ENCODE measurements at regions of chr17 and their contacts with region 1.

Region 1: DNA sequence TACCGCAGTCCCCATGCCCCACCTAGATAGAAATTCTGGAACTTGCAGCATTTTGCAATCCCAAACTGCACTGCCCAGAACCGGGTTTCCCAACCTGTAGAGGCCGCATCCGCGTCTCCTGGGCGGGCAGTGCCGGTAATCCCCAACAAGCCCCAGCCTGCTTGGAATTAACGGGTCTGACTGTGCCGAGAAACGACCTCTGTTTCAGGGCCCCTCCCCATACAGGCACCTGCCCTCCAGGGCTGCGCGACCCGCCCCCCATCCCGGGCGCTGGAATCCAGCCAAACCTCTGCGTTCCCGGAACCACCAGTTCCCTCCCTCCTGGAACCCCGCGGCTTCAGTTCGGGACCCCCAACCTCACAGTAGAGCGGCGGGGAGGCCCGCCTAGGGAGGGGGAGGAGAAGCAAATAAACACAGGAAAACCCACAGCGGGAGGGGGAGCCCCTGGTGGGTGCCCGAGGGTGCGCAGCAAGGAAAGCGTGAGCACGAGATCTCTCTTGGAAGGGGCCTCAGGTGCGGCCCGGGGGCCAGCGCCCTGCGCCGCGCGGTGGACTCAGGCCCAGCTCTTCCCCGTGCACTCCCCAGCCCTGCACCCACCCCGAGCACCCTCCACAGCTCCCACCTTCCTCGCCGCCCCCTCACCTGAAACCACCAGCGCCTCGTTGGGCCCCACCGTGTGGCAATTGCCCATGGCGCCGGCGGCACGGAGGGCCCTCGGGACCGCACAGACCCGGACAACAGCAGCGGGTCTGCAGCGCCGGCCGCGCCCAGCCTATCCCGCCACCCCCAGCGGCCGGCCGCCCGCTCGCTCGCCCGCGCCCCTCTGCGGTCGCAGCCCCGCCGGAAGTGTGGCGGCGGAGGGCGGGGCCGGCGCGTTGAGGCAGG is at the start of gene FLOT2:
- DNase-seq: peak; percentile 69
- H3K4me3 Mint-ChIP-seq: peak within 1 kb of the TSS; percentile 96
- H3K27ac Mint-ChIP-seq: peak within 1 kb of the TSS; percentile 95
- H3K4me1 Mint-ChIP-seq: peaks cover 78% of the 10 kb centered on the region
- H3K27me3 Mint-ChIP-seq: no peaks in the 10 kb centered on the region
- total RNA-seq, gene FLOT2: 193 to 200 TPM

Region 2: GRCh38 chr17:28616281-28616680 is 280.8 kb before region 1 on chr17:
- CTCF ChIA-PET with region 1: no interaction called
- POLR2A ChIA-PET with region 1: no interaction called
- DNase-seq: no peak
- H3K4me3 Mint-ChIP-seq: no peak overlapping the region
- H3K27ac Mint-ChIP-seq: no peak overlapping the region
- H3K4me1 Mint-ChIP-seq: no peaks in the 10 kb centered on the region
- H3K27me3 Mint-ChIP-seq: no peaks in the 10 kb centered on the region

Region 3: DNA sequence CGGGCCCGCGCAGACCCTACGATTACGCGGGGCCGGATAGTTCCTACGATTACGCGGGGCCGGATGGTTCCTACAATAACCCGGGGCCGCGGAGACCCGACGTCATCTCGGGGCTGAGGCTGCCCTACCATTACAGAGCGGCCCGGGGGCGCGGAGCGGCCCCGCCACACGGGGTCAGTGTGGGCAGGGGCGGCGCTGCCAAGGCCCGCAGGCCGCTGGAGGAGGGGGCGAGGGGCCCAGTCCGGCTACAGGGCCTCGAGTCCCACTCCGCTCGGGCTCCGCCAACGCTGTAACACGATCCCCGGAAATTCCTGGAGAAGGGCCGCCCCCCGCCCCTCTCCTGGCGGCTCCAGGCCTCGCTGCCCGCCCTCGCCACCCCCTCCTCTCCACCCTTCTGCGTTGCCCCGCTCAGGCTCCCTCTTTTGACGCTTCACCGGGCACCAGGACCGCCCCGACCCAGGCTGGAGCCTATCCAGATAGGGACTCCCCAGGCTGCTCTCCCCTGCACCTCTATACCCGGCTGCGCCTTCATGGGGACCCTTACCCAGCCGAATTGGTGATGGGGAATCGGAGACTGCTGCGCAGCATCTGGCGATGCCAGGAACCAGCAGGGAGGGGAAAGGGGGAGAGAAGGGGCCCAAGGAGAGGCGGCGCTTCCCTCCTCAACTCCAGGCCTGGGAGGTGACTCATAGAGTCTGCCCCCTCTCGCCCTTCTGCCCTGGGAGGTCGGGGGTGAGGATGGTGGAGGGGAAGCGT is 179.4 kb before region 1 on chr17 and contains the start of gene RAB34:
- CTCF ChIA-PET with region 1: no interaction called
- POLR2A ChIA-PET with region 1: interaction called, 14 read pairs
- DNase-seq: peak; percentile 23
- H3K4me3 Mint-ChIP-seq: peak within 1 kb of the TSS; percentile 44
- H3K27ac Mint-ChIP-seq: peak within 1 kb of the TSS; percentile 64
- H3K4me1 Mint-ChIP-seq: peaks cover 40% of the 10 kb centered on the region
- H3K27me3 Mint-ChIP-seq: peaks cover 25% of the 10 kb centered on the region
- total RNA-seq, gene RAB34: 6.5 to 7.4 TPM

Region 4: GRCh38 chr17:28842282-28843012 is 54.7 kb before region 1 on chr17 and contains the start of gene FAM222B:
- CTCF ChIA-PET with region 1: interaction called, 7 read pairs
- POLR2A ChIA-PET with region 1: interaction called, 10 read pairs
- DNase-seq: peak; percentile 88
- H3K4me3 Mint-ChIP-seq: peak within 1 kb of the TSS; percentile 100
- H3K27ac Mint-ChIP-seq: peak within 1 kb of the TSS; percentile 88
- H3K4me1 Mint-ChIP-seq: peaks cover 26% of the 10 kb centered on the region
- H3K27me3 Mint-ChIP-seq: no peaks in the 10 kb centered on the region
- total RNA-seq, gene FAM222B: 15.5 to 17.1 TPM

Region 5: DNA sequence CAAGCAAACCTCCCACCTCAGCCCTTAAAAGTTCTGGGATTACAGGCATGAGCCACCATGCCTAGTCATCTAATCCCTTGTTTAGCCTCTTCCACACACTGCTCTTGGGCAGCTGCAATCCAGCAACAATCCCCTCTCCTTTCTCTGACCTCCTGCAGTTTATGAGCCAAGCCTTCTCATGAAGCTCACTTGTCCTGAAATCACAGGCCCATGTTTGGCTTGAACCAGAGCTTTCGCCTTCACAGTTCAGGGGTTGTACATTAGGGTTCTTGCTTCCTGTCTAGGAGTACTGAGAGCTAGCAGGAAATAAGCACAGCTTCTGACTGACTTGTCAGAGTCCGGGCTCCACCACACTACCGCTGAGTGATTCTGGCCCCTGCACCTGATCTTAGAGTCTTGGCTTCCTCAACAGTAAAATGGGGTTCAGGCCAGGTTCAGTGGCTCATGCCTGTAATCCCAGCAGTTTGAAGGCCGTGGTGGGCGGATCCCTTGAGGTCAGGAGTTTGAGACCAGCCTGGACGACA is 26.0 kb before region 1 on chr17:
- CTCF ChIA-PET with region 1: interaction called, 11 read pairs
- POLR2A ChIA-PET with region 1: interaction called, 19 read pairs
- DNase-seq: peak; percentile 67
- H3K4me3 Mint-ChIP-seq: no peak overlapping the region
- H3K27ac Mint-ChIP-seq: peak overlapping the region; percentile 89
- H3K4me1 Mint-ChIP-seq: peaks cover 21% of the 10 kb centered on the region
- H3K27me3 Mint-ChIP-seq: no peaks in the 10 kb centered on the region

Region 6: DNA sequence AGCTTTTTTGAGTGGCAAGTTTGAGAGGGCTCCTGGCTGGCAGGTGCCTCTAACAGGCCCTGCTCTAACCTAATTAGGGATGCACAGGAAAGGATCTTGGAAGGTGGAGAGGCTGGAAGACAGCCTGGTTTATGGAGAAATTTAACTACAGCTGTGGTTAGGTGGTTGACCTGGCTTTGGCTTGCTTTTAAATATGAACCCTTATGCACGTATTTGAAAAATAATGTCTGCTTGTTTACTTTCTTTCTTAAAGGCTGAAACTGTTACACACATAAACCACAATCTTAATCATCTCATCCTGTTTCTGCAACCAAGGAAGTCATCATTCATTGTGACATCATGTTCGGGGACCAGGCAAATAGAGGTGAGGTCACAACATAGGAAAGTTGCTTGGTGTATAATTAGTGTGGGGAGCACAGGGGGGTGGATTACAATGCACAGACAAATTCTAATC is 28.8 kb after region 1 on chr17:
- CTCF ChIA-PET with region 1: interaction called, 8 read pairs
- POLR2A ChIA-PET with region 1: interaction called, 19 read pairs
- DNase-seq: peak; percentile 59
- H3K4me3 Mint-ChIP-seq: peak overlapping the region; percentile 43
- H3K27ac Mint-ChIP-seq: peak overlapping the region; percentile 78
- H3K4me1 Mint-ChIP-seq: peaks cover 48% of the 10 kb centered on the region
- H3K27me3 Mint-ChIP-seq: no peaks in the 10 kb centered on the region